ENCODE measurements at regions of chr12 and their contacts with region 1.

Region 1: GRCh38 chr12:29103539-29103974 is 45.5 kb upstream of the FAR2 start:
- DNase-seq: peak; percentile 90
- H3K4me3 Mint-ChIP-seq: peak overlapping the region; percentile 59
- H3K27ac Mint-ChIP-seq: peak overlapping the region; percentile 84
- H3K4me1 Mint-ChIP-seq: peaks cover 31% of the 10 kb centered on the region
- H3K27me3 Mint-ChIP-seq: peaks cover 7% of the 10 kb centered on the region

Region 2: GRCh38 chr12:27807063-27807703 is 1296.4 kb before region 1 on chr12:
- intact Hi-C with region 1: loop called (anchors 5 kb)
- DNase-seq: peak; percentile 65
- H3K4me3 Mint-ChIP-seq: peak overlapping the region; percentile 3
- H3K27ac Mint-ChIP-seq: peak overlapping the region; percentile 43
- H3K4me1 Mint-ChIP-seq: peaks cover 17% of the 10 kb centered on the region
- H3K27me3 Mint-ChIP-seq: peaks cover 10% of the 10 kb centered on the region

Region 3: DNA sequence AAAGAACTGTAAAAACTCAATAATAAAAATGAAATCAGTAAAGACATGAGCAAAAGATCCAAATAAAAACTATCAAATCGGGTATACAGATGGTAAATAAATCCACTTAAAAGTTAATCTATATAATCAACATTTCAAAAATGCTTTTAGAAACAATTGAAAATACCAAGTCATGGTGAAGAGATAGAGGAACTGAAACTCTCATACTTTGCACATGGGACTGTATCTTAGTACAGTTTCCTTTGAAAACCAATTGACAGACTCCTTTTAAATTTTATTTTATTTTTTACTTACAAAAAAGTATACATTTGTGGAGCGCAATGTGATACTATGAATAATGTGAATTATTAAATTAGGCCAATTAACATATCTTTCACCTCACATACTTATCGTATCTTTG is 53.1 kb before region 1 on chr12:
- intact Hi-C with region 1: no loop called
- DNase-seq: no peak
- H3K4me3 Mint-ChIP-seq: no peak overlapping the region
- H3K27ac Mint-ChIP-seq: no peak overlapping the region
- H3K4me1 Mint-ChIP-seq: no peaks in the 10 kb centered on the region
- H3K27me3 Mint-ChIP-seq: peaks cover 6% of the 10 kb centered on the region

Region 4: GRCh38 chr12:29082522-29082921 is 21.0 kb before region 1 on chr12:
- intact Hi-C with region 1: loop called (anchors 1 kb)
- DNase-seq: no peak
- H3K4me3 Mint-ChIP-seq: no peak overlapping the region
- H3K27ac Mint-ChIP-seq: no peak overlapping the region
- H3K4me1 Mint-ChIP-seq: no peaks in the 10 kb centered on the region
- H3K27me3 Mint-ChIP-seq: peaks cover 39% of the 10 kb centered on the region

Region 5: DNA sequence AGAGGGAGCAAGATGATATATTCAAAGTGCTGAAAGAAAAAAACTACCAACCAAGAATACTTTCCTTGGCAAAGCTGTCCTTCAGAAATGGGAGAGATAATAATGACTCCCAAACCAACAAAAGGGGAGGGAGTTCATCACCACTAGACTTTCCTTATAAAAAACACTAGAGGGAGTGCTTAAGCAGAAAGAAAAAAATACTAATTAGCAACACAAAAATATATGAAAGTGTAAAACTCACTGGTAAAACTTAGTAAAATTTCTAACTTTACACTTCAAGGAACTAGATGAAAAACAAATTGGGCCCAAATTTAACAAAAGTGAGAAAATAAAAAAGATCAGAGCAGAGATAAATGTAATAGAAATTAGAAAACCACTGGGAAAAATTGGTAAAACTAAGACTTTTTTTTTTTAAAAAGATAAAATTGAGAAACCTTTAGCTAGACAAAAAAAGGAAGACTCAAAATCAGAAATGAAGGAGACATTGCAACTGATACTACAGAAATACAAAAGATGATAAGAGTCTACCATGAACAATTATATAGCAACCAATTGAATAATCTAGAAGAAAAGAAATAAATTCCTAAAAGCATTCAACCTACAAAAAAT is 14.8 kb before region 1 on chr12:
- intact Hi-C with region 1: loop called (anchors 2 kb)
- DNase-seq: no peak
- H3K4me3 Mint-ChIP-seq: no peak overlapping the region
- H3K27ac Mint-ChIP-seq: no peak overlapping the region
- H3K4me1 Mint-ChIP-seq: peaks cover 2% of the 10 kb centered on the region
- H3K27me3 Mint-ChIP-seq: peaks cover 46% of the 10 kb centered on the region

Region 6: GRCh38 chr12:29148911-29149690 is 45.5 kb after region 1 on chr12 and contains the start of gene FAR2:
- intact Hi-C with region 1: loop called (anchors 2 kb)
- DNase-seq: peak; percentile 85
- H3K4me3 Mint-ChIP-seq: peak within 1 kb of the TSS; percentile 95
- H3K27ac Mint-ChIP-seq: peak within 1 kb of the TSS; percentile 93
- H3K4me1 Mint-ChIP-seq: peaks cover 17% of the 10 kb centered on the region
- H3K27me3 Mint-ChIP-seq: peaks cover 56% of the 10 kb centered on the region
- total RNA-seq, gene FAR2: 4.4 and 5.2 TPM in 2 replicates

Region 7: DNA sequence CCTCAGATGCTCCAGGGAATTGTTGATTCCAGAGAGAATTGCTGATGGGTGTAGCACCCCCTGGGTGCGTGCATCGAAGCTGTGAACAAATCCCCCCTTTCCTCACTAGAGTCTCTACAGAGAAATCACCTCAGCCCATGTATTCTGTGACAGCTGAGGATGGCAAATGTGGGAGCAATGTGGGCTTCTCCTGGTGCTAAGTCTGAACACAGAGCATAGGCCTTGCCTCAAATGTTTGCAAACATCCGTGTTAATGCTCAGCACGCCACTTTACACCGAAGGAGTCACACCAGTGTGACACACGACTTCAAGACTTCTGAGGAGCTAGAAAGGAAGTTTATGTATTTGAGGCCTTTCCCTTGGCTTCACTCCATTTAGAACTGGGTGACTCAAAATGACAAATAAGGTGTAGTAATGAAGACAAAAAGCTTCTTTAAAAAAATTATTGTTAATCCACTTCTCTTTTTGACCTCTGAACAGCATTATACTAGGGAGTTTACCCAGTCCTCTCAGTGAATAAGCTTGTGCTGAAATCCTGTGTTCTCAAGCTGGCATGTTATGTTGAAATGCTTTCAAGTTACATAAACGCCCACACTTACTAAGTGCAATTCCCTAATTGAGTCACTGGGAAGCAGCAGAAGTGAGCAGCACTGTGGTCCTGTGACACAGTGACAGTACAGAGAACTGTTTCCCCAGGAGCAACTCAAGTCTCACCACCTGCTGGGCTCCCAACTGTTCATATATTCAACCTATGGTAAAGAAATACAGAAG is 138.4 kb after region 1 on chr12:
- intact Hi-C with region 1: loop called (anchors 1 kb)
- DNase-seq: no peak
- H3K4me3 Mint-ChIP-seq: no peak overlapping the region
- H3K27ac Mint-ChIP-seq: peak overlapping the region; percentile 14
- H3K4me1 Mint-ChIP-seq: peaks cover 13% of the 10 kb centered on the region
- H3K27me3 Mint-ChIP-seq: peaks cover 3% of the 10 kb centered on the region

Region 8: GRCh38 chr12:29380536-29381523 is 277.3 kb after region 1 on chr12 and contains the start of gene ERGIC2:
- intact Hi-C with region 1: loop called (anchors 1 kb)
- DNase-seq: peak; percentile 97
- H3K4me3 Mint-ChIP-seq: peak within 1 kb of the TSS; percentile 96
- H3K27ac Mint-ChIP-seq: peak within 1 kb of the TSS; percentile 98
- H3K4me1 Mint-ChIP-seq: peaks cover 38% of the 10 kb centered on the region
- H3K27me3 Mint-ChIP-seq: no peaks in the 10 kb centered on the region
- total RNA-seq, gene ERGIC2: 95.6 and 101 TPM in 2 replicates

Measured in activated CD4-positive, alpha-beta T cell treated with anti-CD3 and anti-CD28 coated beads, Interleukin-2, amount 10 ng/mL, durations not matched to agents 24 days and 14 days (primary cell).